K562 (cell line): ENCODE measurements at regions of chr19 and their contacts with region 1.

Region 1: DNA sequence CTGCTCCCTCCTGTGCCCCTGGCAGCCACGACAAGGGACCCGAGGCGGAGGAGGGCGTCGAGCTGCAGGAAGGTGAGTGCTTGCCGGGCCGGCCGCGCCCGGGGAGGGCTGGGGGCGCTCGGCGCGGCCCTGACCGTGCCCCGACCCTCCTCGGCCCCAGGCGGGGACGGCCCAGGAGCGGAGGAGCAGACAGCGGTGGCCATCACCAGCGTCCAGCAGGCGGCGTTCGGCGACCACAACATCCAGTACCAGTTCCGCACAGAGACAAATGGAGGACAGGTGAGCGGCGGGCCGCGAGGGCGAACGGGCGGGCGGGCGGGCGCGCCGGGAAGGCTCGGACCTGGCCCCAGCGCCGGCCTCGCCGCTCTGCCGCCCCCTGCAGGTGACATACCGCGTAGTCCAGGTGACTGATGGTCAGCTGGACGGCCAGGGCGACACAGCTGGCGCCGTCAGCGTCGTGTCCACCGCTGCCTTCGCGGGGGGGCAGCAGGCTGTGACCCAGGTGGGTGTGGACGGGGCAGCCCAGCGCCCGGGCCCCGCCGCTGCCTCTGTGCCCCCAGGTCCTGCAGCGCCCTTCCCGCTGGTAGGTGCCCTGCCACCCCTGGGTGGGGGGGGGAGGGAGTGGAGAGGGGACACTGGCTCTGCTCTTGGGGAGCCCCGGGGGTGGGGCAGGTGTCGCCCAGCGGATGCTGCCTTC is 807 bp downstream of the USF2 start:
- DNase-seq: peak; percentile 81 to 95 (median 84)
- ATAC-seq: peak; percentile 84
- H3K4me3 ChIP-seq: peak overlapping the region; percentile 56
- H3K27ac ChIP-seq: peak overlapping the region; percentile 89; the same call in 2 of the 3 replicates
- H3K4me1 ChIP-seq: peaks cover 15 to 44% of the 10 kb centered on the region in 2 experiments
- H3K27me3 ChIP-seq: no peaks in the 10 kb centered on the region
- CTCF ChIP-seq: peak; percentile 48 to 72 (median 59)
- EP300 ChIP-seq: no peak
- POLR2A ChIP-seq: 0 out of 2 replicates have a peak, but pooled peaks have one; percentile 34
- RAD21 ChIP-seq: peak; percentile 54 to 67

Region 2: DNA sequence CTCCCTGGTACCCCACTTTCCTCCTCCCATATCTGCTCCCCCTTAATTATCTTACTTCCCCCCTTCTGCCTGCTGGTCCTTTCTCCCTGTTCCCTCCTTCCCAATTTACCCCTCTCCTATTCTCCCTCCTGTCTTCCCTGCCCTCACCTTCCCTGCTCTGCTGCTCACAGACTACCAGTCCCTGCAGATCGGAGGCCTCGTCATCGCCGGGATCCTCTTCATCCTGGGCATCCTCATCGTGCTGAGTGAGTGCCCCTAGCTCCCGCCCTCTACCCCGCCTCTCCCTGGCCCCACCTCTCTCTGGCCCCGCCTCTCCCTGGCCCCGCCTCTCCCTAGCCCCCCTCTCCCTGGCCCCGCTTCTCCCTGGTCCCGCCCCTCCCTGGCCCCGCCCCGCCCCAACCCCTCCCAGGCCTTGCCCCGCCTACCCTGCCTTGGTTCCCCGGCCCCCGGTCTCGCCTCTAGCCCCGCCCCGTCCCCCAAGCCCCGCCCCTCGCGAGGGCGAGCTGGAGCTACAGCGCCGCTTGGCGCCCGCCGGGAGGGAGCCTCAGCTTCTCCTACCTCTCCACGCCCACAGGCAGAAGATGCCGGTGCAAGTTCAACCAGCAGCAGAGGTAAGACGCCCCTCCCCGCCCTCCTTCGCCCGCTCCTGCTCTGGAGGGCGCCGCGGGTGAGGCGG is 128.5 kb before region 1 on chr19:
- CTCF ChIA-PET with region 1: no interaction called
- POLR2A ChIA-PET with region 1: interaction called, 5 read pairs
- in situ Hi-C with region 1: no loop called
- intact Hi-C with region 1: loop called (anchors 5 kb)
- DNase-seq: peak; percentile 93 to 100 (median 100)
- ATAC-seq: peak; percentile 89
- H3K4me3 ChIP-seq: peak overlapping the region; percentile 22; the same call in 1 of the 2 replicates
- H3K27ac ChIP-seq: peak overlapping the region; percentile 14; the same call in 1 of the 3 replicates
- H3K4me1 ChIP-seq: peaks cover 13 to 59% of the 10 kb centered on the region in 2 experiments
- H3K27me3 ChIP-seq: no peaks in the 10 kb centered on the region; a peak in 2 of 5 replicates
- CTCF ChIP-seq: peak; percentile 49 to 89 (median 75)
- EP300 ChIP-seq: 0 out of 2 replicates have a peak, but pooled peaks have one; percentile 2
- POLR2A ChIP-seq: no peak
- RAD21 ChIP-seq: peak; percentile 34 to 52

Region 3: DNA sequence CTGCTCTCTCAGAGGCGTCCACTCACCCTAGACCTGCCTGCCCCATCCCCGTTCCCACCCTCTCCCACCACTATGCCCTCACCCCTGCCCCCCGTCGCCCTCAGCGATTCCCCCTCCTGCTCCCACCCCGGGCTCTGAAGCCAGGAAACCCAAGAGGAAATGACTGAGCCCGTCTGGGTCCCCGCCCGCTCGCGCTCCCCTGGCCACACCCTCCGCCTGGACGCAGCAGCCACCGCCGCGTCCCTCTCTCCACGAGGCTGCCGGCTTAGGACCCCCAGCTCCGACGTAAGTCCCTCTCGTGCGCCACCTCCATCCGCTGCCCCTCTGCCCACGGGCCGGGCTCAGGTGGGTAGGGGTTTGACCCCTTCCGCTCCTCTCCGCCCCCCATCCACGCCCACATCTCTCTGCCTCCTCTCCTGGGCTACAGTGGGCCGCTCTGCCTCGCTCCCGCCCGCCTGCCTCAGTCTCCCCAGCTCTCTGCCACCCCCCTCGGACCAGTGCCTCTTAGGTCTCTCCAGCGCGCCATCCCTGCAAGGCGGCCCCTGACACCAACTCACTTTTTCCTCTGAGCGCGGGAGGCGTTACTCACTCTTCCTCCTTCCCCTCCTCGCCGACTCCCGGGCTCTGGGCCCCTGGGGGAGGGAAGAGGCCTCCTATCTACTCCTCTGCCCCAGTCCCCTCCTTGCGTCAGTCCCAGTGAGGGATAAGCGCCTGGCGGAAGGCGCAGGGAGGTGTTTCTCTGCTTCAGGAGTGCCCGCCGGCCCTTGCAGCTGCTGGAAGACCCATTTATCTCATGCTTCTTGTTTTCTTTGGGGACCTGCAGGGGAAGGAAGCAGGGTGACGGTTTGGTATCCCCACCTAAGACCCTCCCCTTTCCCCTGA is 114.8 kb before region 1 on chr19 and contains the start of gene FXYD5:
- CTCF ChIA-PET with region 1: no interaction called
- POLR2A ChIA-PET with region 1: interaction called, 3 read pairs
- in situ Hi-C with region 1: no loop called
- intact Hi-C with region 1: loop called (anchors 5 kb)
- DNase-seq: peak; percentile 88 to 94 (median 91)
- ATAC-seq: peak; percentile 92
- H3K4me3 ChIP-seq: peak within 1 kb of the TSS; percentile 92
- H3K27ac ChIP-seq: peak within 1 kb of the TSS; percentile 95
- H3K4me1 ChIP-seq: peaks cover 13 to 44% of the 10 kb centered on the region in 2 experiments; a peak in 4 of 5 replicates
- H3K27me3 ChIP-seq: no peaks in the 10 kb centered on the region
- CTCF ChIP-seq: peak in 2 of 3 experiments; percentile 16 to 18; a peak in 2 of 6 replicates
- EP300 ChIP-seq: 0 out of 2 replicates have a peak, but pooled peaks have one; percentile 30
- POLR2A ChIP-seq: peak; percentile 94
- RAD21 ChIP-seq: peak in 1 of 2 experiments; percentile 22; a peak in 3 of 4 replicates
- polyA plus RNA-seq, gene FXYD5: 125 to 198 TPM

Region 4: DNA sequence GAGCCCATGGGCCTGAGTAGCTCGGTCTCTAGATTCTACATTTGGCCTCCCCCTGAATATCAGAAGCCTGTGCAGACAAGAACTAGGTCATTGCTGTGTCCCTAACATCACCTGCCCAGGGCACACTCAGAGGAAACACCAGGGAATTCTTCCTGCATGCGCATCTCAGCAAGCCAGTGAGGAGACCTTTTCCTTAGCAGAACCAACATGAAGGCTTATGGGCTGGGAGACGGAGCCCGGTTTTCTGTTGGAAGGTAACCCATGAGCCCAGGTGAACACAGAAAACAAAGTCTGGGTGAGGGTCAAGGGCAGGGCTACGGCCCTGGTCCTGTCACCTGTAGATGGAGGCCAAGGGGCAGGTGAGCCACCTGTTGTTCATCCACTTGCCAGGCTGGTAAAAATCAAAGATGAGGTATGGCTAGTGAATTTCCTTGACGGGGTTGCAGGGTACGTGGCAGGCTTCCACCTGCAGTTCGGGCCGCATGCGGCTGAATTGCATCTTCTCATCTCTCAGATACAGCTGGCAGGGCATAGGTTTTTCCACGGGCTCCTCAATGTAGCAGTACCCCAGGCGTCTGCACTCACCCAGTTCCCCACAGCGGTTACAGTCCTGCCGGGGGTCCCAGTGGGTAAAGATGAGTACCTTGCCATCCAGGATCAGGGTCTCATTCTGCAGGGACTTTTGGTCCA is 37.5 kb before region 1 on chr19:
- CTCF ChIA-PET with region 1: no interaction called
- POLR2A ChIA-PET with region 1: no interaction called
- in situ Hi-C with region 1: no loop called
- intact Hi-C with region 1: no loop called
- DNase-seq: no peak
- ATAC-seq: no peak
- H3K4me3 ChIP-seq: no peak overlapping the region
- H3K27ac ChIP-seq: no peak overlapping the region
- H3K4me1 ChIP-seq: peaks cover 0 to 6% of the 10 kb centered on the region in 2 experiments; a peak in 2 of 5 replicates
- H3K27me3 ChIP-seq: 0 out of 5 replicates have a peak, but pooled peaks cover 0 to 3% of the 10 kb centered on the region in 2 experiments
- CTCF ChIP-seq: no peak
- EP300 ChIP-seq: no peak
- POLR2A ChIP-seq: no peak
- RAD21 ChIP-seq: no peak

Region 5: DNA sequence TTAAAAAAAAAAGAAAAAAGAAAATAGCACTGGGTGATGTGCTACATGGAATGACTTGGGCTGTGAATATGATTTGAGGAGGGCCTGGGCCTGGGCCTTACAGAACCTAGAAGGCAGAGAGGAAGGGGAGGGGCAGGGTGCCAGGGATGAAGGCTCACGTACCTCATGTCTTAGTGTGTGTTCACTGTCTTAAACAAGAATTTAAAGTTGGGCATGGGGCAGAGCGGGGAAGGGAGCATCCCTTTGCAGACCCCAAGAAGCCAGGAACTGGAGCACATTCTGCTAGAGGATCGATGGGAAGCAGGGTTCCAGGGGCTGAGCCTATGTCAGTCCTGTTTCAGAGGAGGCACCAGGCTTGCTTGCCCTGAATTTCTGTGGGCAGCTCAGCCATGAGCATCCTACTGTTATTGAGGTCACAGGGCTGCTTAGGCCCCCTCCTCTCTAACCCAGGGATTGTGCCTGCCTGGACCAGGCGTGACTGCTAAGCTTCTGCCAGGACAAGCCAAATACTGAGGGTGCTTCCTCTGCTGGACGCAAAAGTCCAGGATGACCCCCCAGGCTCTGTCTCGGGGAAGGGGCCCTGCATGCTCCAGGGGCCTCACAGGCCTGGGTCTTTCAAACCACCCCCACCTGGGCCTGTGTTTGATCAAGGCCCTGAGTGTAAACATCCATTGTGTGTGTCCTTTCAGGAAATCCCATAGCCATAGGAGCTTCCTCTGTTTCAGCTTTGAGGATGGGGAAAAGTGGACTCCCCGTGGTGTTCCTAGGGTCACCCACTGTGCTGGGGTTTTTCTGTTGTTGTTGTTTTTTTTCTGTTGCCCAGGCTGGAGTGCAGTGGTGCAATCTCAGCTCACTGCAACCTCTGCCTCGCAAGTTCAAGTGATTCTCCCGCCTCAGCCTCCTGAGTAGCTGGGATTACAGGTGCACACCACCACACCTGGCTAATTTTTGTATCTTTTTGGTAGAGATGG is 16.0 kb before region 1 on chr19:
- CTCF ChIA-PET with region 1: no interaction called
- POLR2A ChIA-PET with region 1: interaction called, 31 read pairs
- in situ Hi-C with region 1: no loop called
- intact Hi-C with region 1: no loop called
- DNase-seq: no peak
- ATAC-seq: no peak
- H3K4me3 ChIP-seq: no peak overlapping the region
- H3K27ac ChIP-seq: no peak overlapping the region
- H3K4me1 ChIP-seq: peaks cover 8 to 24% of the 10 kb centered on the region in 2 experiments; a peak in 4 of 5 replicates
- H3K27me3 ChIP-seq: no peaks in the 10 kb centered on the region
- CTCF ChIP-seq: no peak
- EP300 ChIP-seq: no peak
- POLR2A ChIP-seq: no peak
- RAD21 ChIP-seq: no peak

Region 6: DNA sequence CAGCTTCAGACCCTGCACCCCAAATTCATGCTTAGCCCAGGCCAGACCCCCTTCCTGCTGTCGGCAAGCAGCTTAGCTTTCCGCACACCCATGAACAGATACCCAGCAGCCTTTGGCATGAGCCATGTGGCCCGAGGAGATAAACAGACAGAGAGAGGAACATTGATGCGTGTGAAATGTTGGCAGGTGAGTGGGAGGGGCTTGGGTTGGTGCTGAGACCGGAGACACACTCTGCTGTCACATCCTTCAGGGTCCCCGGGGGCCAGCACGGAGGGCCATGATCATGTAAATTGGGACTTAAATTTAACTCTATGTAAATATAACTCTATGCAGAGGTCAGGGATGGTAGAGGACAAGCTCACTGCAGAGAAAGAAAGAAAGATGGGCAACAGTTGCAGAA is 60.9 kb after region 1 on chr19:
- CTCF ChIA-PET with region 1: no interaction called
- POLR2A ChIA-PET with region 1: no interaction called
- in situ Hi-C with region 1: loop called (anchors 10 kb)
- intact Hi-C with region 1: no loop called
- DNase-seq: no peak
- ATAC-seq: no peak
- H3K4me3 ChIP-seq: no peak overlapping the region
- H3K27ac ChIP-seq: no peak overlapping the region
- H3K4me1 ChIP-seq: peaks cover 2 to 8% of the 10 kb centered on the region in 2 experiments; a peak in 4 of 5 replicates
- H3K27me3 ChIP-seq: no peaks in the 10 kb centered on the region
- CTCF ChIP-seq: no peak
- EP300 ChIP-seq: no peak
- POLR2A ChIP-seq: no peak
- RAD21 ChIP-seq: no peak

Region 7: DNA sequence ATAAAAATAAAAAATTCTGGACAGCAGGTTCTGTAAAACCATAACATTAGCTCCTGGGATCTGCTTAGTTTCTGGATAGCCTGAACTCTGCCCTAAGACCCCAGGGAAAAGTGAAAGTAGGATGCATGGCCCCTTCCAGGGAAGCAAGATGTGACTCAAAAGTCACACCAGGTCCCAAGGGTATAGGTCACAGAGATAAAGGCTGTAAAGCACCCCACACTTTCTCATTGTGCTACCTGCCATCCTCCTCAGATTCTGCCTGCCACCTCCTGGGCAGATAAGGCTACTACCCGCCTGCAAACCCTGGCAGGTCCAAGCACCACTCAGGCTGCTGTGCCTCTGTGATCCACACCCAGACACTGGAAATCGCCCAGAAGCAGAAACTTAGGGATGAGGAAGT is 199.1 kb after region 1 on chr19:
- CTCF ChIA-PET with region 1: no interaction called
- POLR2A ChIA-PET with region 1: no interaction called
- in situ Hi-C with region 1: loop called (anchors 10 kb)
- intact Hi-C with region 1: no loop called
- DNase-seq: peak in 3 of 4 experiments; percentile 45 to 51 (median 47)
- ATAC-seq: peak; percentile 88
- H3K4me3 ChIP-seq: no peak overlapping the region
- H3K27ac ChIP-seq: no peak overlapping the region
- H3K4me1 ChIP-seq: no peaks in the 10 kb centered on the region
- H3K27me3 ChIP-seq: peaks cover 34 to 37% of the 10 kb centered on the region in 2 experiments
- CTCF ChIP-seq: peak; percentile 57 to 81 (median 65)
- EP300 ChIP-seq: no peak
- POLR2A ChIP-seq: no peak
- RAD21 ChIP-seq: peak; percentile 85 to 89

Region 8: GRCh38 chr19:35528218-35529038 is 258.9 kb after region 1 on chr19 and contains the start of gene SBSN:
- CTCF ChIA-PET with region 1: no interaction called
- POLR2A ChIA-PET with region 1: no interaction called
- in situ Hi-C with region 1: no loop called
- intact Hi-C with region 1: no loop called
- DNase-seq: no peak
- ATAC-seq: no peak
- H3K4me3 ChIP-seq: no peak within 1 kb of the TSS
- H3K27ac ChIP-seq: no peak within 1 kb of the TSS
- H3K4me1 ChIP-seq: peaks cover 3 to 7% of the 10 kb centered on the region in 2 experiments; a peak in 3 of 5 replicates
- H3K27me3 ChIP-seq: peaks cover 51 to 88% of the 10 kb centered on the region in 2 experiments
- CTCF ChIP-seq: no peak
- EP300 ChIP-seq: no peak
- POLR2A ChIP-seq: no peak
- RAD21 ChIP-seq: no peak
- polyA plus RNA-seq, gene SBSN: not detected